Activated B cell treated with CpG ODN at 0.5 μM for 24 hours (primary cell): ENCODE measurements at regions of chr15 and their contacts with region 1.

Region 1: GRCh38 chr15:75095594-75095993 is 72.2 kb downstream of the PPCDC start:
- DNase-seq: no peak
- ATAC-seq: peak; percentile 9
- H3K4me3 Mint-ChIP-seq: peak overlapping the region; percentile 50
- H3K27ac Mint-ChIP-seq: peak overlapping the region; percentile 73
- H3K4me1 Mint-ChIP-seq: peaks cover 36% of the 10 kb centered on the region
- H3K27me3 Mint-ChIP-seq: peaks cover 13% of the 10 kb centered on the region
- CTCF ChIP-seq: no peak

Region 2: GRCh38 chr15:75069301-75069925 is 26.2 kb before region 1 on chr15:
- CTCF ChIA-PET with region 1: no interaction called
- POLR2A ChIA-PET with region 1: interaction called, 8 read pairs
- intact Hi-C with region 1: loop called (anchors 1 kb)
- DNase-seq: peak; percentile 44
- ATAC-seq: peak; percentile 100
- H3K4me3 Mint-ChIP-seq: peak overlapping the region; percentile 29
- H3K27ac Mint-ChIP-seq: peak overlapping the region; percentile 82
- H3K4me1 Mint-ChIP-seq: peaks cover 60% of the 10 kb centered on the region
- H3K27me3 Mint-ChIP-seq: no peaks in the 10 kb centered on the region
- CTCF ChIP-seq: no peak

Region 3: GRCh38 chr15:75081150-75081549 is 14.4 kb before region 1 on chr15:
- CTCF ChIA-PET with region 1: no interaction called
- POLR2A ChIA-PET with region 1: no interaction called
- intact Hi-C with region 1: no loop called
- DNase-seq: no peak
- ATAC-seq: no peak
- H3K4me3 Mint-ChIP-seq: no peak overlapping the region
- H3K27ac Mint-ChIP-seq: no peak overlapping the region
- H3K4me1 Mint-ChIP-seq: peaks cover 13% of the 10 kb centered on the region
- H3K27me3 Mint-ChIP-seq: peaks cover 7% of the 10 kb centered on the region
- CTCF ChIP-seq: no peak

Region 4: DNA sequence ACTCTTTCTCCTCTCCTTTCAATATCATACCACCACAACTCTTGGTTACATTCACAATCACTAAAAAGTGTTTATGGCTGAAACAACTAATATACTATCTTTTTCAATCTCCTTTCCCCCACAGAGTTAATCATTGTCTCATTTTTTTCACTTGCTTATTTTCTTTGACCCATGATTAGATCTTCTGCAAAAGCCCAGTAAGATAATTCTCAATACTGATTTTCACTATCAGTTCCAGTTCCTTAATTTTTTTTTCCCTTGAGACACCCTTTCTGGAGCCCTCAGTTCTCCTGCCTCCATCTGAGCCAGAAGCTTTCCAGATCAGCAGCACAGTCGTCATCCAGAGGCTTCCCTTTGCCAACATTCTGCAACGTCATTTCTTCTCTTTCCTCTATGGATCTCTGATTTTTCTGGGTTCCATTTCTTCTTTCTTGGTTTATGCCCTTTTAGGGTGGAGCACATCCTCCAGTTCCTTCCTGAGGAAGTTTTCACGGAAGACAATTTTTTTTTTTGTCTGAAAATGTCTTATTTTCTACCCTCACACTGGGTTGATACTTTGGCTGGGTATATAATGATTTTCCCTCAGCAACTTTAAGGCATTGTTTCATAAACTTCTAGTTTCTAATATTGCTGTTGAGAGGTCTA is 17.4 kb after region 1 on chr15:
- CTCF ChIA-PET with region 1: no interaction called
- POLR2A ChIA-PET with region 1: interaction called, 20 read pairs
- intact Hi-C with region 1: loop called (anchors 1 kb)
- DNase-seq: no peak
- ATAC-seq: peak; percentile 35
- H3K4me3 Mint-ChIP-seq: peak overlapping the region; percentile 4
- H3K27ac Mint-ChIP-seq: peak overlapping the region; percentile 68
- H3K4me1 Mint-ChIP-seq: peaks cover 63% of the 10 kb centered on the region
- H3K27me3 Mint-ChIP-seq: no peaks in the 10 kb centered on the region
- CTCF ChIP-seq: no peak

Region 5: DNA sequence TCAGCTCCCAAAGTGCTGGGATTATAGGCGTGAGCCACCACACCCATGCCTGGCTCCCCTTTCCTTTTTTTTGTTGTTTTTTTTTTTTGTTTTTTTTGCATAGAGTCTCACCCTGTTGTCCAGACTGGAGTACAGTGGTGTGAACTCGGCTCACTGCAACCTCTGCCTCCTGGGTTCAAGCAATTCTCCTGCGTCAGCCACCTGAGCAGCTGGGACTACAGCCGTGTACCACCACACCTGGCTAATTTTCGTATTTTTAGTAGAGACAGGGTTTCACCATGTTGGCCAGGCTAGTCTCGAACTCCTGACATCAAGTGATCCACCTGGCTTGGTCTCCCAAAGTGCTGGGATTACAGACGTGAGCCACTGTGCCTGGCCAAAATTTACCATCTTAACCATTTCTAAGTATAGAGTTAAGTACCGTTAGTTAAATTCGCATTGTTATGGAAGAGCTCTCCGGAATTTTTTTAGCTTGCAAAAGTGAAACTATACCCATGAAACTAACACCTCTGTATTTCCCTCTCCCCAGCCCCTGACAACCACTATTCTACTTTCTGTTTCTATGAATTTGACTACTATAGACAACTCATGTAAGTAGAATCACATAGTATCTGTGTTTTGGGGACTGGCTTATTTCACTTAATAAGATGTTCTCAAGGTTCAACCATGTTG is 35.1 kb after region 1 on chr15:
- CTCF ChIA-PET with region 1: interaction called, 3 read pairs
- POLR2A ChIA-PET with region 1: no interaction called
- intact Hi-C with region 1: loop called (anchors 5 kb)
- DNase-seq: no peak
- ATAC-seq: peak; percentile 96
- H3K4me3 Mint-ChIP-seq: peak overlapping the region; percentile 80
- H3K27ac Mint-ChIP-seq: peak overlapping the region; percentile 73
- H3K4me1 Mint-ChIP-seq: peaks cover 19% of the 10 kb centered on the region
- H3K27me3 Mint-ChIP-seq: no peaks in the 10 kb centered on the region
- CTCF ChIP-seq: no peak